ENCODE measurements at regions of chr12 and their contacts with region 1.

Region 1: GRCh38 chr12:93098077-93098476 is 169.0 kb upstream of the EEA1 start:
- DNase-seq: peak; percentile 90
- H3K4me3 Mint-ChIP-seq: no peak overlapping the region
- H3K27ac Mint-ChIP-seq: no peak overlapping the region
- H3K4me1 Mint-ChIP-seq: peaks cover 9% of the 10 kb centered on the region
- H3K27me3 Mint-ChIP-seq: no peaks in the 10 kb centered on the region

Region 2: DNA sequence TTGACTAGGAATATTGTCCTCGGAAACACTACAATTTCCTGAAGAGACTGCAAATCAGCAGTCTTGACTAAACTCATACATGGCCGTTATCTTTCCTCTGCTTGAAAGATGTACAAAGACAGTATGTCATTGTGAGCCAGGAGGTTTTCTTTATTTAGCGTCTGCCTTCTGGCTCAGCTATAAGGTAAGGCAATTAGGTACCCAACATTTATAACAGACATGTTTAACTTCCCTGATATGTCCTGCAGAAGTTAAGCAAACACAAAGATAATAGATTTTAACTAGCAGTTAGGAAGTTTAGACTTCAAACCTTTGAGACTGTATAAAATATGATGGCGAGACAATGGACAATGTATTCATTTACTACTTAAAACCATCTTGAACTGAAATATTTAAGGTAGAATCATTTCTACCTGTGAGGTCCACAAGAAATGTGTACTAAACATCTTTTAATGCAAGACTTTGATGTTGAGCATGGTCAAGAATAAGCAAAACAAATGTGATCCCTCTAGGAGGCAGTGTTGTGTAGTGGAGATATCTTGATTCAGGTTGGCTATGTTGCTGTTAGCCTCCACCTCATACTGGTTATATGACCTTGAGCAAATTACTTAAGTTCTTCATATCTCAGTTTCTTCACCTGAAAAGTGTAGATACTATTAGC is 72.8 kb before region 1 on chr12:
- intact Hi-C with region 1: loop called (anchors 10 kb)
- DNase-seq: peak; percentile 62
- H3K4me3 Mint-ChIP-seq: no peak overlapping the region
- H3K27ac Mint-ChIP-seq: no peak overlapping the region
- H3K4me1 Mint-ChIP-seq: no peaks in the 10 kb centered on the region
- H3K27me3 Mint-ChIP-seq: peaks cover 9% of the 10 kb centered on the region

Region 3: GRCh38 chr12:93109551-93110203 is 11.6 kb after region 1 on chr12:
- intact Hi-C with region 1: no loop called
- DNase-seq: no peak
- H3K4me3 Mint-ChIP-seq: no peak overlapping the region
- H3K27ac Mint-ChIP-seq: peak overlapping the region; percentile 79
- H3K4me1 Mint-ChIP-seq: peaks cover 3% of the 10 kb centered on the region
- H3K27me3 Mint-ChIP-seq: no peaks in the 10 kb centered on the region

Region 4: GRCh38 chr12:93243689-93244513 is 145.8 kb after region 1 on chr12:
- intact Hi-C with region 1: loop called (anchors 5 kb)
- DNase-seq: peak; percentile 74
- H3K4me3 Mint-ChIP-seq: peak overlapping the region; percentile 78
- H3K27ac Mint-ChIP-seq: peak overlapping the region; percentile 77
- H3K4me1 Mint-ChIP-seq: peaks cover 34% of the 10 kb centered on the region
- H3K27me3 Mint-ChIP-seq: no peaks in the 10 kb centered on the region

Region 5: GRCh38 chr12:93287149-93287548 is 189.1 kb after region 1 on chr12:
- intact Hi-C with region 1: no loop called
- DNase-seq: no peak
- H3K4me3 Mint-ChIP-seq: no peak overlapping the region
- H3K27ac Mint-ChIP-seq: no peak overlapping the region
- H3K4me1 Mint-ChIP-seq: no peaks in the 10 kb centered on the region
- H3K27me3 Mint-ChIP-seq: no peaks in the 10 kb centered on the region

Region 6: DNA sequence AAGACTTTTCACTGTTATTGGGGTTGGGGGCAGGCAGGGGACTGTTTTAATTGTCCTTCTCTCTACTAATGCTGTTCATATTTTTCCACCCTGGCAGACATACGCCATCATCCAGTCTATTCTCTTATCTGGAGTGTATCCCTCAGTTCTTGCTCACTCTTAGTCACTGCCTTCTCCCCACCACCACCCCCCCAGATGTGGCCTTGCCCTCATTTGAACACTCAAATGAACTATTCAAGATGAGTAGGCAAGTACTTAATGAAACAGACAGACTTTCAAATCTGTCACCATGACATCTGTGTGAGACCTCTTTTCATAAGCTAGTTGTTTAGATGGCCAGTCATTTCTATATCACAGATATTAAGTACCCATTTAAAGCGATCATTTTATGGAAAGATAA is 289.7 kb after region 1 on chr12:
- intact Hi-C with region 1: loop called (anchors 2 kb)
- DNase-seq: no peak
- H3K4me3 Mint-ChIP-seq: no peak overlapping the region
- H3K27ac Mint-ChIP-seq: peak overlapping the region; percentile 72
- H3K4me1 Mint-ChIP-seq: peaks cover 35% of the 10 kb centered on the region
- H3K27me3 Mint-ChIP-seq: no peaks in the 10 kb centered on the region

Measured in activated CD4-positive, alpha-beta T cell treated with anti-CD3 and anti-CD28 coated beads, Interleukin-2, amount 10 ng/mL, durations not matched to agents 24 days and 14 days (primary cell).